ENCODE measurements at regions of chr18 and their contacts with region 1.

Region 1: DNA sequence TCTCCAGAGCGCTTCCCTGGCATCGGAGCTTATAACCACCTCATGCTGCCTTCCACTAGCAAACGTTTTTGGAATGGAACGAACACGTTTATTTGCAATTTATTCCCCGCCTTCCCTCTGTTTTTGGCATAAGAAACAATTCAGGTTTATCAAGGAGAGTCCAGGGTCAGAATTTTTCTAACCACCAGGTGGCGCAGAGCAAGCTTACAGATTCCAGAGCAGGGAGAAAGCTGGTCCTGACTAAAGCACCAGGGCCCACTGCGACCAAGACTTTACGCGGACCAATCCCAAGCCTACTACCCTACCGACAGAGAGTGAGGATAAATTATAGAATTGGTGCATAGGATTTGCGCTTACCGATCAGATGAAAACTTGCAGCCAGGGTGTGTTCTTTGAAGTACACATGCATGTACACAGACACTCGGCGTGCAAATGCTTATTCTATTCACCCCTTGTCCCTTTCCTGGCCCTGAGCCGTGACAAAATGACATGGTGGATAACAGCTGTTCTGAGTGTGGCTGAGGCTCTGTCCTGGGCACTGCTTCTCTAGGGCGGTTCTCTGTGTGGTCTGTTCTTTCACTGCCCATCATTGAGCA is 34.7 kb downstream of the NAPG start:
- DNase-seq: peak in 4 of 5 donors; percentile 57 to 71 (median 70)
- ATAC-seq: peak; percentile 66 to 74 (median 72)
- H3K4me3 ChIP-seq: peak overlapping the region in 8 of 12 donors; percentile 27 to 51 (median 33)
- H3K27ac ChIP-seq: peak overlapping the region in 3 of 12 donors; percentile 6 to 57 (median 19)
- H3K4me1 ChIP-seq: peaks cover 0 to 20% (median 7%) of the 10 kb centered on the region in 12 donors
- H3K27me3 ChIP-seq: no peaks in the 10 kb centered on the region
- CTCF ChIP-seq: peak; percentile 68 to 82 (median 76)
- POLR2A ChIP-seq: no peak

Region 2: DNA sequence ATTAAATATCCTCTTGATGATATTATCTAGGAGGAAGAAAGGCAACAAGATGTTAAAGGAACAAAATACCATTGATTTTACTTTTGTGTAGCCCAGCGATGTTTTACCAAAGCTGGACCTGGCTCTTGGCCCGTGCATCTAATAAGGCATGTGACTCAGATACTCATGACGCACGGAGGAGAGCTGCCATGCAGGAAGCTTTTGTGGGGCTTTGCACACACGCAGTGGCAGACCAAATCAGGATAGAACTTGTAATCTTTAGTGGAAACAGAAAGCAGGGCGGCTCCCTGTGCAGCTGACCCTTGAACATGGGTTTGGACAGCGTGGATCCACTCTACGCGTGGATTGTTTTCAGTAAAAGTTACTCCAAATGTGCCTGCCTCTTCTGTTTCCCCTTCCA is 155.2 kb after region 1 on chr18:
- intact Hi-C with region 1: loop called in 2 of 10 experiments (anchors 10 kb)
- DNase-seq: peak in 1 of 5 donors; percentile 52
- ATAC-seq: peak in 3 of 4 donors; percentile 62 to 86 (median 80)
- H3K4me3 ChIP-seq: no peak overlapping the region
- H3K27ac ChIP-seq: no peak overlapping the region
- H3K4me1 ChIP-seq: peaks cover 0 to 6% (median 0%) of the 10 kb centered on the region in 12 donors
- H3K27me3 ChIP-seq: no peaks in the 10 kb centered on the region
- CTCF ChIP-seq: no peak
- POLR2A ChIP-seq: no peak

Region 3: GRCh38 chr18:11034884-11035283 is 474.3 kb after region 1 on chr18:
- intact Hi-C with region 1: loop called in 4 of 10 experiments (anchors 5 to 10 kb)
- DNase-seq: no peak
- ATAC-seq: no peak
- H3K4me3 ChIP-seq: no peak overlapping the region
- H3K27ac ChIP-seq: no peak overlapping the region
- H3K4me1 ChIP-seq: no peaks in the 10 kb centered on the region
- H3K27me3 ChIP-seq: no peaks in the 10 kb centered on the region
- CTCF ChIP-seq: no peak
- POLR2A ChIP-seq: no peak

Region 4: DNA sequence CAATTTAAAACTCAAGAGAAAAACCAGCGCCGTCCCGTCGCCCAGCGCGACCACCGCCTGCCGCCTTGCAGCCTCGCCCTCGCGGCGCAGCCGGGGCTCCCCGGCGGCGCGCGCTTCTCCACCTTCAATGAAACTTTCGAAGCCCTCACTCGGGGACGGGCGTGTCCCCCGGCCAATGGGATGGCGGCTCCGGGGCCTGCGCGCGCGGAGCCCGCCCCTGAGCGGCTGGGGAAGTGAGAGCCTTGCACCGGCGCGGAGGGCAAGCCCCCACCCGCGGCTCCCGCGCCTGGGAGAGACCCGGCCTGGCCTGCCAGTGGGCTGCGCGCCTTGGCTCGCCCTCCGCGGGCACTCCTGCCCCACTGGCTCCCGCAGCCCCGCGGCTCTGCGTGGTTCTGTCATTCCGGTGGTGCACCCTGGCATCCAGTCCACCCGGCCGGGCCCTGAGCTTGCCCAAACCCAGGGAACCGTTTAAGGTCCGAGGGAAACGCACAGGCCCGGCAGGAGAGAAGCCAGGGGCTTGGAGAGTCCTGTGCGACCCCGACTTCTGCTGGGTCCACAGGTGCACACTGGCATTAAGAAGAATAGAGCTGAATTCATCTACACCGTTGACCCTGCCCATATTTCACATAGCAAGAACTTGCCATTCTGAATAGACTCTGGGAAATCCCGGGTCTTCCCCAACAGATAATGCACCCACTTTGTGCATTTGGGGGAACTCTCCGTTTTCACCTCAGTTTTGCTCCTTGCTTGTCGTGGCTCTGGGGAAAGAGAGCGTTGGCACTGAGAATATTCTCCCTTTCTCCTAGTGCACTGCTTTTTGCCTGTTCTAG is 589.1 kb after region 1 on chr18 and contains the start of gene PIEZO2:
- intact Hi-C with region 1: loop called (anchors 2 to 10 kb)
- DNase-seq: peak; percentile 31 to 67 (median 39)
- ATAC-seq: peak in 3 of 4 donors; percentile 74 to 78 (median 77)
- H3K4me3 ChIP-seq: peak within 1 kb of the TSS in 11 of 12 donors; percentile 30 to 55 (median 45)
- H3K27ac ChIP-seq: no peak within 1 kb of the TSS
- H3K4me1 ChIP-seq: peaks cover 0 to 22% (median 13%) of the 10 kb centered on the region in 12 donors
- H3K27me3 ChIP-seq: peaks cover 29 to 77% (median 48%) of the 10 kb centered on the region in 9 donors
- CTCF ChIP-seq: no peak
- POLR2A ChIP-seq: no peak
- total RNA-seq, gene PIEZO2: 0.06 to 4.9 (median 0.39) TPM in 7 of 9 donors, not detected in the others

Measured in heart left ventricle (tissue), 16 donors.